Activated CD4-positive, alpha-beta T cell treated with anti-CD3 and anti-CD28 coated beads for 36 hours (primary cell): ENCODE measurements at regions of chr15 and their contacts with region 1.

Region 1: DNA sequence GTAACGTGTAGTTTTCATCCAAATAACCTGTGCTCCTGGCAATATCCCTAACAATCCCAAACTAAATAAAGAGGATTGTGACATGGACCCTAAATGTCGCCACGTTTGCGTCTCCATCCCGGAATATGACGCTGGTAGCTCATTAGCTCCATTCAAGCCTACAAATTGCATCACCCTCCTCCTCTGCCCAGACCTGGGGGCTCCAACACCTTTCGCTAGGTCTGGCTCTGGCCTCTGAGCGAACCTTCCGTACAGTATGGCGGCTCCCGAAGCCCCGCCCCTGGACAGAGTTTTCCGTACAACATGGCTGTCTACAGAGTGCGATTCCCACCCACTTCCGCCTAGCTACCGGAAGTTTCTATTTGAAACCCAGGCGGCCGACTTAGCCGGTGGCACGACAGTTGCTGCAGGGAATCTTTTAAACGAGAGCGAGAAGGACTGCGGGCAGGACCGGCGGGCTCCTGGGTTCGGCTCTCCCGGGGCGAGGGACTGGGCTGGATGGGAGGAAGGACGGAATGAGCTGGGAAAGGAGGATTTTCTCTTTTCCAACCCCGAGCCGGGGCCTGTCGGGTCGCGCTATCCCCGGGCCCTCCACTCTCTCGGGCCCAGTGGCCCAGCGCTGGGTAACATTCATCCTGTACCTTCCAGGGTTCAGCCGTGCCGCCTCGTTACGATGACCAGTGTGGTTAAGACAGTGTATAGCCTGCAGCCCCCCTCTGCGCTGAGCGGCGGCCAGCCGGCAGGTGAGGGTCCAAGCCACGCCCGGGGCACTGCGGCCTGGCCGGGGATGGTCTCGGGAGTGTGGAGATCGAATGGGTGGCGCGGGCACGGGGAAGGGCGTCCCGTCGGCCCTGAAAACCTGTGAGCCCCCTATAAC is at the start of gene KNSTRN:
- DNase-seq: peak; percentile 97
- ATAC-seq: peak; percentile 100
- H3K4me3 Mint-ChIP-seq: peak within 1 kb of the TSS; percentile 93
- H3K27ac Mint-ChIP-seq: peak within 1 kb of the TSS; percentile 78
- H3K4me1 Mint-ChIP-seq: peaks cover 22% of the 10 kb centered on the region
- H3K27me3 Mint-ChIP-seq: no peaks in the 10 kb centered on the region
- total RNA-seq, gene KNSTRN: 56.2 to 58.8 TPM

Region 2: DNA sequence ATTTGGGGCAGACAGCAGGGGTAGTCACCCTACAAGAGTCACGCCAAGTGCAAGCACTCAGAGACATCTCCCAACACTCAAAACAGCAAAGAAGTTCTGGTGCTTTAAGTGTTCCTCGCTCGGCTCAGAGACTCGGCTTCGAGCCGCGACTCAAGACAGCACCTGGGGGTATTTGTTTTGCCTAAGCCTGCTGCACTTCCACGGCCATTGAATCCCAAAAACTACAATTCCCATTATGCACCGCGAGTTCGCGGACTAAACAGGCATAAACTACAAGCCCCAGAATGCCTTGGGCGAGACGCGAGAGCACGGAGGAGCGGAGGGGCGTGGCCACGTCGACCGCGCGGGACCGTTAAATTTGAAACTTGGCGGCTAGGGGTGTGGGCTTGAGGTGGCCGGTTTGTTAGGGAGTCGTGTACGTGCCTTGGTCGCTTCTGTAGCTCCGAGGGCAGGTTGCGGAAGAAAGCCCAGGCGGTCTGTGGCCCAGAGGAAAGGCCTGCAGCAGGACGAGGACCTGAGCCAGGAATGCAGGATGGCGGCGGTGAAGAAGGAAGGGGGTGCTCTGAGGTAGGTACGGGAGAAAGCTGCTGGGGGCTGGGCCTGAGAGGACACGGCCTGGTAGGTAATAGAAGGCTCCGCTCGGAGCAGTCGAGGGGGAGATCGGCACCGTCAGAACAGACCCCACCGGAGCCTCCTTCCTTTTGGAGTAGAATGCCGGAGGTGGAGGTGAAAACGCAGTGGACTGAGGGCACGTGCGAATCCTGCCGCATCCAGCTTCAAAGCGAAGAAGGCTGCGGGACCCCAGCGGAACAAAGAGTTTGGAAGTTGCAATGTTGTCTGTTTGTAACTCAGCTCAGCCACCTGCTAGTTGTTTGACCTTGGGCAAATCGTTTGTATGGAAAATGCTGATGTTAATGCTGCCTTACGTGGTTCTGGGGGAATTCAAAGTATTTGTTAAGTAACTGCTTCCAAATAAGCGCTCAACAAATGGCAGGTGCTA is 221.8 kb before region 1 on chr15 and contains the start of gene BUB1B:
- CTCF ChIA-PET with region 1: no interaction called
- POLR2A ChIA-PET with region 1: no interaction called
- intact Hi-C with region 1: loop called in 1 of 2 experiments (anchors 1 kb)
- DNase-seq: peak; percentile 96
- ATAC-seq: peak; percentile 95
- H3K4me3 Mint-ChIP-seq: no peak within 1 kb of the TSS
- H3K27ac Mint-ChIP-seq: no peak within 1 kb of the TSS
- H3K4me1 Mint-ChIP-seq: peaks cover 8% of the 10 kb centered on the region
- H3K27me3 Mint-ChIP-seq: no peaks in the 10 kb centered on the region
- total RNA-seq, gene BUB1B: 95.3 to 99.5 TPM

Region 3: GRCh38 chr15:40357723-40358470 is 24.9 kb before region 1 on chr15 and contains the start of gene DISP2:
- CTCF ChIA-PET with region 1: no interaction called
- POLR2A ChIA-PET with region 1: no interaction called
- intact Hi-C with region 1: loop called in 1 of 2 experiments (anchors 1 kb)
- DNase-seq: peak; percentile 93
- ATAC-seq: peak; percentile 94
- H3K4me3 Mint-ChIP-seq: peak within 1 kb of the TSS; percentile 67
- H3K27ac Mint-ChIP-seq: peak within 1 kb of the TSS; percentile 20
- H3K4me1 Mint-ChIP-seq: peaks cover 3% of the 10 kb centered on the region
- H3K27me3 Mint-ChIP-seq: peaks cover 7% of the 10 kb centered on the region
- total RNA-seq, gene DISP2: 0.02 to 0.04 TPM

Region 4: GRCh38 chr15:40367686-40368611 is 14.9 kb before region 1 on chr15:
- CTCF ChIA-PET with region 1: interaction called, 18 read pairs
- POLR2A ChIA-PET with region 1: interaction called, 3 read pairs
- intact Hi-C with region 1: loop called (anchors 1 kb)
- DNase-seq: peak; percentile 94
- ATAC-seq: peak; percentile 98
- H3K4me3 Mint-ChIP-seq: peak overlapping the region; percentile 74
- H3K27ac Mint-ChIP-seq: peak overlapping the region; percentile 51
- H3K4me1 Mint-ChIP-seq: peaks cover 8% of the 10 kb centered on the region
- H3K27me3 Mint-ChIP-seq: no peaks in the 10 kb centered on the region

Region 5: DNA sequence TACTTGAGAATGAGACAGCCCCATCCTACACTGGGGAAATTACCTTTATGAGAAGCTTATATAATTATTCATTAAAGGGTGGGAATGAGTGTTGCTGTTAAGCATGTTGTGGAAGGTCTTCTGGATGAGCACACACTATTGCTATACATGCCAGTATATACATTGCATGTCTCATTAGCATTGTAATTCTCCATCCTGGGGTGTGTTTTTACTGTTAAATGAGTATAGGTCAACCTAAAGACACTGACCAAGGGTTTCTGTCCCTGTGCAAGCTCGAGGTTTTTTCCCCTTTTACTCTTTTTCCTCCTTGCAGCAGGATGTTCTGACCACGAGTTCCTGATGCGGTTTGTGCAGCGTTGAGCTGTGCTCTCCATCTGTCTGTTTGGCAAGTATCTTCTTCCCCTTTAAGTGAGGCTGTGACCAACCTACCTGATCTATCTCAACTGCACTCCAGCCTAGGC is 15.6 kb after region 1 on chr15:
- CTCF ChIA-PET with region 1: interaction called, 6 read pairs
- POLR2A ChIA-PET with region 1: interaction called, 7 read pairs
- intact Hi-C with region 1: loop called in 1 of 2 experiments (anchors 2 kb)
- DNase-seq: peak; percentile 69
- ATAC-seq: peak; percentile 93
- H3K4me3 Mint-ChIP-seq: peak overlapping the region; percentile 3
- H3K27ac Mint-ChIP-seq: peak overlapping the region; percentile 65
- H3K4me1 Mint-ChIP-seq: peaks cover 22% of the 10 kb centered on the region
- H3K27me3 Mint-ChIP-seq: no peaks in the 10 kb centered on the region